Activated CD4-positive, alpha-beta T cell treated with anti-CD3 and anti-CD28 coated beads, Interleukin-2, amount 10 ng/mL, durations not matched to agents 7 days and 5 days (primary cell): ENCODE measurements at regions of chr3 and their contacts with region 1.

Region 1: DNA sequence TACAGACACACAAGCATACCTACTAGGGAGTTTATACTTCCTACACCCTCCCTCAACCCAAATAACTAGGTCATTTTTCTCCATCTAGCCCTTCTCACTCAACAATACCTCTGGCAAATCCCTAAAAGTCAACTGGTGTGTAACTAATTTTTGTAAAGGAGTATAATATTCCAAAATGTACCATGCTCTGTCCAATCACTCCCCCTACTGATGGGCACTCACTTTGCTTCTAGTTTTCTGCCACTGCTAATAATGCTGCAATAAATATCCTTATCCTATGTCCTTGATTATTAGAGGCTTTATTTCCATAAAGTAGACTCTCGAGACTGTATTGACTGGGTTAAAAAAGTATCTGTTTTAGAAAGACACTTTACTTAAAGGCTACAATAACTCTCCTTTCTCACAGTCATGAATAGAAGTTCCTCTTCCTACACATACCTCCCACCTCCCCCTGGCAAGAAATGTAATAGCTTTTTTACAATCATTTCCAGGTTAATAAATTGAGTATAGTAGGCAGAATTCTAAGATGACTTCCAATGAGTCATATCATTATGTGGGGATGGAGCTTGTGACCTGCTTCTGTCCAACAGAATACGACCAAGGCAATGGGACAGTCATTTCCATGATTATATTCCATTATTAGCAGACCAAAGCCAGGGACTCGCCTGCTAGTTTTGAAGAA is 30.0 kb downstream of the SHQ1 start:
- DNase-seq: no peak
- H3K4me3 Mint-ChIP-seq: no peak overlapping the region
- H3K27ac Mint-ChIP-seq: no peak overlapping the region
- H3K4me1 Mint-ChIP-seq: peaks cover 15% of the 10 kb centered on the region
- H3K27me3 Mint-ChIP-seq: no peaks in the 10 kb centered on the region

Region 2: GRCh38 chr3:72665701-72666443 is 152.4 kb before region 1 on chr3:
- CTCF ChIA-PET with region 1: interaction called, 27 read pairs
- POLR2A ChIA-PET with region 1: no interaction called
- DNase-seq: peak; percentile 67
- H3K4me3 Mint-ChIP-seq: no peak overlapping the region
- H3K27ac Mint-ChIP-seq: no peak overlapping the region
- H3K4me1 Mint-ChIP-seq: no peaks in the 10 kb centered on the region
- H3K27me3 Mint-ChIP-seq: no peaks in the 10 kb centered on the region